HEK293T (cell line): ENCODE measurements at regions of chr19 and their contacts with region 1.

Region 1: DNA sequence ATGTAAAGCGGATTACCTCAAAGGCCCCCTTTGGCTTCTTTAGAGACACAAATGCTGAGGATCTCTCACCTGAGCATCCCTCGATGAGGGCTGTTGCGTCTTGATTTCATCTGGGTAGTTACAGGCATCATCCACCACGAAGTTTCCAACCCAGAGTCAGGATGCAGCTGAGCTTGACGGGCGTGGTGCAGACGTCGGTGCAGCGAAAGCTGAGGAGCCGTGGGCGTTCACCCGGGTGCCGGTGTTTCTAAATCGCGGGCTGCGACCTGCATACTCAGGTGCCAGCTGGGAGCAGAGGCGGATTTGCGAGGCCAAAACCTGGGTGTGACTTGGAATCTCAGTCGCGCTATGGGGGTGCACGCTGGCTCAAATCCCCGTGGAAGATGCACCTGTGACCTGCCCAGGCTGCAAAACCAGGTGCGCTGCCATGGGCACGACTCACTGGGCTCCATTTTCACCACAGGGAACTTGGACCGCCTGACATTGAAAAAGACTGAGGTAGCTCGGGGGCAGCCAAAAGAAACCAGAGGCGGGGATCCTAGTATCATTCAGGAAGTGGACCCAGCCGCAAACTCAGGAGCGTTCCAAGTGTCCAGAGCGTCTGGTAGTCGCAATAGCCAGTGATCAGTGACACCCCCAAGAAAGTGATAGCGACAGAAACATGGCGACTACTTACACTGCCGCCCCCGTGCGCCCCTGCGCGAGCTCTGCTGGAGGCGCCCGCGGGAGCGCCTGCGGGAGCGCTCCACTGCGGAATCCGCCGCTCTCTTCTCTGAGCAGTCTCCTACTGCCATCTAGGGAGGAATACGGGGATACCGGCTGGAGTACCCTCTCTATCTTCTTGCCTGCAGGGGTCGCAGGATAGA is 36.4 kb upstream of the IGFL4 start:
- DNase-seq: peak; percentile 90

Region 2: DNA sequence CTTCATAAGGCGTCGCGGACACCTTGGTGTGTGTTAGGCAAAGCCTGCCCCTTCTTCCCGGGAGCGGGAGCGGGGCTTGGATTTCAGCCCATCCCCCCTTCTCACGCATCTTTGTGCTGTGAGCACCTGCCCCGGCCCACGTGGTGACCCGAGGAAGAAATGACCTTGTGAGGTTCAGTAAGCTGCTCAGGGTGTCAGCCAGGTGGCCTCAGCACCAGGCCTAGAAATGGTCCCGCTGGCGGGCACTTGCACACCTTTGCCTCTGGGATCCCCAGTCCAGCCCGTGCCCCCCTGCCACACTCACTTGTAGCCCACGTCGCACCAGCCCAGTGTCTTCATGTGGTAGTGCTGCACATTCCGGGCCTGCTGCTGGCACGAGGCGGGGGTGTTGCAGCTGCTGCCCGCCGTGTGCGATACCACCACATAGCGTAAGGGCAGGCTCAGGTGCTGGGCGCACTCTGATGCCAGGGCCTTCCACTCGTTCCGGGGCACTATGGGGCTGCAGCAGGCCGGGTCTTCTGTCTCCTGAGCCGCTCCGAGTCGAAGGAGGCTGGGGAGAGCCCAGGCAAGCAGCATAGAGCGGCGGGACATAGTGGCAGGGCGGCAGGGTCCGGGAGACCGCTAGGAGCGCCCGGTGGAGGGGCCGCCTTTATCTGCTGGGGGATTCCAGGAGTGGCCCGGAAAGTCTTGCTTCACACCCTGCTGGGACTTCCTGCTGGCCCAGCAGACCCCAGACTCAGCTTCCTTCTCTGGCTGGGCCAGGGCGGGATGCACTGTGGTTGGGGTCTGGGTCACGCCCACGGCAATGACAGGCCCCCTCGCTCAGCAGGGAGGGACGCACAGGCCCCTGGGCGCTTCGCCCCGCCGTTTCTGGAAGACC is 54.5 kb before region 1 on chr19 and contains the start of gene PGLYRP1:
- CTCF ChIA-PET with region 1: interaction called, 63 read pairs
- POLR2A ChIA-PET with region 1: interaction called, 3 read pairs
- DNase-seq: no peak

Region 3: GRCh38 chr19:46030812-46031550 is 46.2 kb before region 1 on chr19:
- CTCF ChIA-PET with region 1: interaction called, 63 read pairs
- POLR2A ChIA-PET with region 1: interaction called, 10 read pairs
- DNase-seq: no peak

Region 4: DNA sequence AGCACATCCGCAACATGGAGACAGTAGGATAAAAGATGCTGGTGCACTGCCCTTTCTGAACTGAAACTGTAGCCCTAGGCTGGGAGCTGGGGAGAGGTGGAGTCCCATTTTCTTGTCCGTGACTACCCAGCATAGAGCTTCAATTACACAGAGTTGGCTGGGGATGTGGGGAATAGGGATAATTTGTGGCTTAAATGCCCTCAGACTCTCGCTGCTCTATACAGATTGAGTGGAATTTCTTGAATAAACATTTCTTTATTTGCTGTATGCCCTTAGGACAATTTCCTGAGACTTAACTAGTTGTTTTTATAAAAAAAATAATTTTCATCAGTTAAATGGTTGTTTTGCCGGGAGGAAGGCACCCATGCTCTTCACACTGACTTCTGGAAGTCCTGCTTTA is 78.0 kb after region 1 on chr19:
- CTCF ChIA-PET with region 1: no interaction called
- POLR2A ChIA-PET with region 1: no interaction called
- DNase-seq: no peak

Region 5: GRCh38 chr19:46265217-46265828 is 188.1 kb after region 1 on chr19:
- CTCF ChIA-PET with region 1: interaction called, 93 read pairs
- POLR2A ChIA-PET with region 1: interaction called, 3 read pairs
- DNase-seq: peak; percentile 75